Cardiac septum (tissue), 1 donor: ENCODE measurements at regions of chr1 and their contacts with region 1.

Region 1: DNA sequence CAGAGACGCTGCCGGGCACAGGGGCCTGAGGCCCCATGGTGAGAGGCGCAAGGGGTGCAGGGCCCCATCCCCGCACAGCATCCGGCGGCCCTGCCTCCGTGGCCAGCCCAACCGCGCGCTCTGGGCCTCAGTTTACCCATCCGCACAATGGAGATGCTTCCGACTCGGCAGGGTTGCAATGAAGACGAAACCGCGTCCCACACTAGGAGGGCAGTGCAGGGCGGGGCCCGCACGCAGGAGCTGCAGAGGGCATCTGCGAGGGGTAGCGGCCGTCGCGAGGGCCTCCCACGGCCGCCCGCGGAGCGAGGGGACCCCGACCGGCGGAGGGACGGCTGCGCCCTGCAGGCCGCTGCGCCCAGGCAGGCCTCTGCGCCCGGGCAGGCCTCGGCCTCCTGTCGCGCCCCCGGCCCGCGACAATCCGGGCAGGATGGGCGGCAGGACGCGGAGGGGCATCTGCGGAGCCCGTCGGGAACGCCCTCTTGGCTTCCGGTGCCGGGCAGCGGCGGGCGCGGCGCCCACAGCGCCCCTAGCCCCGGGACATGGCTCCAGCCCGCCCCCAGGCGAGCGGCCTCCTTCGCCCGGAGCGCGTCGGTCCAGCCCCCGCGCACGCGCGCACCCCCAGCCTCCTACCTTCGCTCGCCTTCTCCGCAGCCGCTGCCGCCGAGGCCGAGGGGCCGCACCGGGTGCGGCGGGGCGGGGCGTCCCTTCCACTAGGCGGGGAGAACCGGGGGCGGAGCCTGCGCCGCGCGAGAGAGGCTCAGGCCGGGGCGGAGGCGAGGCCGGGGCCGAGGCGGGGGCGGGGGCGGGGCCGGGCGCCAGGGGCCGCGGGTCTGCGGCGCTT is 15.3 kb downstream of the RNU1-1 start:
- DNase-seq: peak; percentile 94

Region 2: DNA sequence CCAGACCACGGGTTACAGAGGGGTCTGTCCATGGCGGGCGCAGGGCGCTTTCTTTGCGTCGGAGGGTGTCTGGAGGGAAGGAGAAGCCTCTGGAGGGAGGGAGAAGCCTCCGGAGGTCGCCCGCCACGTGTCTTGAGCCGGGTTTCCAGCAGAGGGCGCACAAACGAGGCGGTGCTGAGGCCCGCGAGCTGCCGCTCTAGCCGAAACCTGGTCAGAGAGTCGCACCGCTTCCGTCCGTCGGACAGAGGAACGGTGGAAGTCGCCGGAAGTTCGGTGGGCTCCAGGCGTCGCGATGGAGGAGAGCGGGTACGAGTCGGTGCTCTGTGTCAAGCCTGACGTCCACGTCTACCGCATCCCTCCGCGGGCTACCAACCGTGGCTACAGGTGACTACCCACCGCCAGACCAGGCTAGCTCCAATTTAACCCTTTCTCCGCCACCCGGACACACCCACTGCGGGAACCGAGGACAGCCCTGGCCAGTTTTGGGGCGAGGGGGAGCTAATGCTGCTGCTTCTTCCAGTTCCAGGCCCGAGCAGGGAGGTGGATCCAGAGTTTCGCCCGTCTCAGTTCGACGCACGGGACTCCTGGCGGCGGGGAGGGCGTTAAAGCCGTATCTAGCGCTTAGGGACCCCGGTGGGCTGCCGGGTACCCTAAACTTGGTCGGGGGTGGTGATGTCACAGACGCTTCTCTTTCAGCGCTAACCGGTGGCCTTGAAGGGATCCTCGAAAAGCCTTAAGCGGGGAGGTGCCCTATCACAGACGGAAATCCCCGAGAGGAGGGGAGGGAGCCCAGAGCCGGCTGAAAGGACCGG is 58.1 kb before region 1 on chr1 and contains the start of gene NECAP2:
- intact Hi-C with region 1: loop called (anchors 5 kb)
- DNase-seq: peak; percentile 97
- total RNA-seq, gene NECAP2: 14.5 TPM